Aorta (tissue), 5 donors: ENCODE measurements at regions of chr3 and their contacts with region 1.

Region 1: GRCh38 chr3:13419505-13420044 is 547 bp downstream of the NUP210 start:
- DNase-seq: peak in 1 of 2 donors; percentile 80
- ATAC-seq: peak; percentile 42
- H3K4me3 ChIP-seq: peak overlapping the region; percentile 38 to 58
- H3K27ac ChIP-seq: no peak overlapping the region
- H3K4me1 ChIP-seq: no peaks in the 10 kb centered on the region
- H3K27me3 ChIP-seq: no peaks in the 10 kb centered on the region

Region 2: GRCh38 chr3:12601072-12601471 is 818.5 kb before region 1 on chr3:
- intact Hi-C with region 1: no loop called
- DNase-seq: no peak
- ATAC-seq: no peak
- H3K4me3 ChIP-seq: no peak overlapping the region
- H3K27ac ChIP-seq: peak overlapping the region in 1 of 2 donors; percentile 36
- H3K4me1 ChIP-seq: peaks cover 3% of the 10 kb centered on the region in 2 donors
- H3K27me3 ChIP-seq: no peaks in the 10 kb centered on the region

Region 3: DNA sequence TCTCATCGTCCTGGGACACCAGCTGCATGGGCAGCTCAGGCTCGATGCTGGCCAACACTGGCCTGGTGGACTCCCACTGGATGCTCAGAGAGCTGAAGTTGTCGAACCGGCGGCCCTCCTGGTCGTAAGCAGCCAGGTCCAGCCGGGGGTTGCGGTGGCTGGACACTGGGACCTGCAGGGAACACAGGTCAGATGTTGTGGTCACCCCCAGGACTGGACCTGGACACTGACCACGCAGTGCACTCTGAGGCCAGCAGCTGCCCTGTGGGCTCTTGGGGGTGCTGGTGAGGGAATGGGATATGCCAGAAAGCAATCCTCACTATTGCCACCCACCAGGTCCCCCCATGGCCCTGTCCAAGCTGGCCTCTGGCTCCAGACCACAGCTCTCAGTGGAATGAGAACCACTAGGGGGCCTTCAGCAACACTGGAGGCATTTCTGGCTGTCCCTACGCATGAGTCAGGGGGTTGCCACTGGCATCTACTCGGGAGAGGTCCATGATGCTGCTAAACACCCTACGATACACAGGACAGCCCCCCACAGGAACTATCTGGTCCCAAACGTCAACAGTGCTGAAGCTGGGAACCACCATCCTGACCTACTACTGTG is 65.5 kb before region 1 on chr3:
- intact Hi-C with region 1: no loop called
- DNase-seq: no peak
- ATAC-seq: no peak
- H3K4me3 ChIP-seq: no peak overlapping the region
- H3K27ac ChIP-seq: no peak overlapping the region
- H3K4me1 ChIP-seq: no peaks in the 10 kb centered on the region
- H3K27me3 ChIP-seq: no peaks in the 10 kb centered on the region

Region 4: DNA sequence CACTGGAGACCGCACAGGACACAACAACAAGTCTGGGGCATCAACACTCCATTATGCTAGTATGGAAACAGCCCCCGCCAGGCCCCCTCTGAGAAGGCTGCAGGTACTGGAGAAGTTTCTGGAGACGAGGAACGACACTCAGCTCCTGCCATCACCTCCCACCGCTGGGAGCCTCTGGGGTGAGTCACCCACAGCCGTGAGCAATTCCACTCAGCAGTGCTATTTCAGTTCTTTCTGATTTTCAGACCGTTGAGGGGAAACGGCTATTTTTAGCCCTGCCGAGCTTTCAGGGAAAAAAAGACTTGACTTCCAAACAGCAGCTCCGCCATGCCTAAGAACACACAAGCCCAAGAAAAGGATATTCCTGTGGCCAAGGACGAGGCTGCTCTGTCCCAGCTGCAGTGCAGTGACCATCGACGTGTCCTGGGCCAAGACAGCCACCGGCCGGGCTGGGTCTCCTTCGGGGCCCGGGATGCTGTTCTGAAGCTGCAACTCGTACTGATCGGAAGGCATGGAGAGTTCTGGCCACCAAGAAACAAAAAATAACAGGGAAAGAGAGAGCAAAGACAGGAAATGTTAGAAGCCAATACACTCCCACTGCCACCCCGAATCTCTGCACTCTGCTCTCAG is 40.3 kb before region 1 on chr3:
- intact Hi-C with region 1: loop called in 1 of 2 experiments (anchors 5 kb)
- DNase-seq: peak; percentile 71 to 87
- ATAC-seq: peak; percentile 78
- H3K4me3 ChIP-seq: no peak overlapping the region
- H3K27ac ChIP-seq: peak overlapping the region; percentile 16 to 94
- H3K4me1 ChIP-seq: peaks cover 0 to 2% of the 10 kb centered on the region in 2 donors
- H3K27me3 ChIP-seq: no peaks in the 10 kb centered on the region

Region 5: DNA sequence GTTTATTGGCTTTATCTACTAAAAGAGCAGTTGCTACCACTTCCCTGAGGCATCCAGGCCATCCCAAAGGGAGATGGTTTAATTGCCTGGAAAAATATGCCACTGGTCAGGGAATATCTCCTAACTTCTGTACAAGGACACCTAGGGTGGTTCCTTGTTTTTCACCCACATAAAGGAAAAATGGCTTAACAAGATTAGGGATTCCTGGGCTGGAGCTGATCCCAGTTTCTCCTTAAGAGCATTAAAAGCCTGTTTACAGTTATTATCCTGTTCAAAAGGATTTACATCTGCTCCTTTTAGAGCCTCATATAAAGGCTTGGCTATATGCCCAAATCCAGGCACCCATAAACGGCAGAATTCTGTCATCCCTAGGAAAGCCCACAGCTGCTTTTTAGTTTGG is 530.5 kb after region 1 on chr3:
- intact Hi-C with region 1: no loop called
- DNase-seq: no peak
- ATAC-seq: no peak
- H3K4me3 ChIP-seq: no peak overlapping the region
- H3K27ac ChIP-seq: no peak overlapping the region
- H3K4me1 ChIP-seq: no peaks in the 10 kb centered on the region
- H3K27me3 ChIP-seq: no peaks in the 10 kb centered on the region